Activated CD8-positive, alpha-beta T cell treated with anti-CD3 and anti-CD28 coated beads, Interleukin-2, amount 10 ng/mL, durations not matched to agents 7 days and 5 days (primary cell): ENCODE measurements at regions of chr9 and their contacts with region 1.

Region 1: GRCh38 chr9:99819856-99820684 is 1.6 kb upstream of the NR4A3 start:
- DNase-seq: peak; percentile 93
- ATAC-seq: peak; percentile 48
- H3K4me3 Mint-ChIP-seq: peak overlapping the region; percentile 85
- H3K27ac Mint-ChIP-seq: peak overlapping the region; percentile 92
- H3K4me1 Mint-ChIP-seq: peaks cover 52% of the 10 kb centered on the region
- H3K27me3 Mint-ChIP-seq: peaks cover 11% of the 10 kb centered on the region

Region 2: GRCh38 chr9:99840072-99840471 is 20.0 kb after region 1 on chr9:
- CTCF ChIA-PET with region 1: interaction called, 45 read pairs
- POLR2A ChIA-PET with region 1: interaction called, 5 read pairs
- DNase-seq: no peak
- ATAC-seq: no peak
- H3K4me3 Mint-ChIP-seq: no peak overlapping the region
- H3K27ac Mint-ChIP-seq: no peak overlapping the region
- H3K4me1 Mint-ChIP-seq: peaks cover 6% of the 10 kb centered on the region
- H3K27me3 Mint-ChIP-seq: no peaks in the 10 kb centered on the region

Region 3: GRCh38 chr9:99906403-99907207 is 86.5 kb after region 1 on chr9 and contains the start of gene STX17:
- CTCF ChIA-PET with region 1: interaction called, 44 read pairs
- POLR2A ChIA-PET with region 1: interaction called, 9 read pairs
- DNase-seq: peak; percentile 80
- ATAC-seq: peak; percentile 87
- H3K4me3 Mint-ChIP-seq: peak within 1 kb of the TSS; percentile 98
- H3K27ac Mint-ChIP-seq: peak within 1 kb of the TSS; percentile 99
- H3K4me1 Mint-ChIP-seq: peaks cover 24% of the 10 kb centered on the region
- H3K27me3 Mint-ChIP-seq: peaks cover 12% of the 10 kb centered on the region
- total RNA-seq, gene STX17: 35.3 to 40.0 TPM

Region 4: DNA sequence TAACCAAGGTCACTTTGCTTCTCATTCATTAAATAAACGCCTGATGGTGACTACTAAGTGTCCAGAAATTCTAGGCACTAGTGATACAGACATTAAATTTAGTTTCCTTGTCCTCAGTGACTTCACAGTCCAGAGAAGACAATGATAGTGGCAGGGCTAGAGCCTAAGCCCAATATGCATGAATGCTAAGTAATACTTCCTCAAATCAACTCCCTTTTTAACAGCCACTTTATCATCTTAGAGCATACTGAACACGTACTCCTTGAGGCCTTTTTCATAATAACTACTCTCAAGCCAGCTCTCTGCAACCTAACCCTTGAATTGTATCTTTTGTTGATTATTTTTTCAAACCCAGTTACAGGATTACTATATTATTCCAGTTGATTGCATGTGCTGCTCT is 160.5 kb after region 1 on chr9:
- CTCF ChIA-PET with region 1: interaction called, 10 read pairs
- POLR2A ChIA-PET with region 1: no interaction called
- DNase-seq: no peak
- ATAC-seq: no peak
- H3K4me3 Mint-ChIP-seq: no peak overlapping the region
- H3K27ac Mint-ChIP-seq: no peak overlapping the region
- H3K4me1 Mint-ChIP-seq: no peaks in the 10 kb centered on the region
- H3K27me3 Mint-ChIP-seq: no peaks in the 10 kb centered on the region